ENCODE measurements at regions of chr4 and their contacts with region 1.

Region 1: GRCh38 chr4:82900331-82901128 is at the start of gene THAP9:
- DNase-seq: peak; percentile 99
- ATAC-seq: peak; percentile 92
- H3K4me3 Mint-ChIP-seq: no peak within 1 kb of the TSS
- H3K27ac Mint-ChIP-seq: no peak within 1 kb of the TSS
- H3K4me1 Mint-ChIP-seq: peaks cover 39% of the 10 kb centered on the region
- H3K27me3 Mint-ChIP-seq: no peaks in the 10 kb centered on the region
- total RNA-seq, gene THAP9: 1.7 to 2.6 TPM

Region 2: GRCh38 chr4:81814987-81815541 is 1085.5 kb before region 1 on chr4:
- CTCF ChIA-PET with region 1: no interaction called
- POLR2A ChIA-PET with region 1: no interaction called
- intact Hi-C with region 1: no loop called
- DNase-seq: no peak
- ATAC-seq: no peak
- H3K4me3 Mint-ChIP-seq: no peak overlapping the region
- H3K27ac Mint-ChIP-seq: no peak overlapping the region
- H3K4me1 Mint-ChIP-seq: no peaks in the 10 kb centered on the region
- H3K27me3 Mint-ChIP-seq: peaks cover 9% of the 10 kb centered on the region

Region 3: GRCh38 chr4:82428969-82429727 is 471.4 kb before region 1 on chr4:
- CTCF ChIA-PET with region 1: no interaction called
- POLR2A ChIA-PET with region 1: interaction called, 6 read pairs
- intact Hi-C with region 1: loop called (anchors 1 to 2 kb)
- DNase-seq: peak; percentile 96
- ATAC-seq: peak; percentile 55
- H3K4me3 Mint-ChIP-seq: peak overlapping the region; percentile 94
- H3K27ac Mint-ChIP-seq: peak overlapping the region; percentile 99
- H3K4me1 Mint-ChIP-seq: peaks cover 50% of the 10 kb centered on the region
- H3K27me3 Mint-ChIP-seq: no peaks in the 10 kb centered on the region

Region 4: DNA sequence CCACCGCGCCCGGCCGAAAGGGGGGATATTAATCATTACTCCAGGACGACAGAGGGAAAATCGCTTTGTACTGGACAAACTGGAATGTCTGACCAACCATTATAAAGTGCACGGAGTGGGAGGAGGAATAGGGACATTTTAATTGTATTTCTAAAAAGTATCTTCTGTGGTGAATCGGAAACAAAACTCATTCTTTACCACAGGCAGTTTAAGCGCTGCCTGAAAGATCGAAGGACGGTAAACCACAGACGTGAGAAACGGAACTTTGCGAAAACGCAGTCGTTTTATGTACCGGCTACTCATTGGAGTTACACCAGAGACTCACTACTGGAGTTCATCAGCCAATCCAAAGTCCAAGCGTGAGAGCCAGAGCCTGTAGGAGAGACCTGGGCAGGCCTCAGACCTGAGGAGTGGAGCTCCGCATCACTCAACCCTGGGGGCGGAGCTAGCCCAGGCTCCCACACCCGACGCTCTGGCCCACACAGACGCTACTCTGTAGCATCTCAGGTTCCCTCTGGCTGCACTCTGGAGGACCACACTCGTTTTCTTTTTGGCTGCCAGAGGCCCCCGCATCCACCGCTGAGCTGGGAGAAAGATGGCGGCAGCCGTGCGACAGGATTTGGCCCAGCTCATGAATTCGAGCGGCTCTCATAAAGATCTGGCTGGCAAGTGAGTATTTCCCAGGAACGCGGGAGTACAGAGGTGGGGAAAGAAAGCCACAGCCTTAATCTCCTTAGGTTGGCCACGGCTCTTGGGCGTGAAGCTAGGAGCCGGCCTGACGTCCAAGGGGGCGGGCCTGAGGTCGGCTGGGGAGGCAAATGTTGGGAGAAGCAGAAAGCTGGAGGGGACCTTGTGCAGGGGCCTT is 134.3 kb after region 1 on chr4 and contains the start of gene COPS4:
- CTCF ChIA-PET with region 1: interaction called, 5 read pairs
- POLR2A ChIA-PET with region 1: interaction called, 14 read pairs
- intact Hi-C with region 1: loop called (anchors 1 kb)
- DNase-seq: peak; percentile 97
- ATAC-seq: peak; percentile 97
- H3K4me3 Mint-ChIP-seq: peak within 1 kb of the TSS; percentile 91
- H3K27ac Mint-ChIP-seq: peak within 1 kb of the TSS; percentile 94
- H3K4me1 Mint-ChIP-seq: peaks cover 22% of the 10 kb centered on the region
- H3K27me3 Mint-ChIP-seq: no peaks in the 10 kb centered on the region
- total RNA-seq, gene COPS4: 35.7 to 35.9 TPM

Region 5: DNA sequence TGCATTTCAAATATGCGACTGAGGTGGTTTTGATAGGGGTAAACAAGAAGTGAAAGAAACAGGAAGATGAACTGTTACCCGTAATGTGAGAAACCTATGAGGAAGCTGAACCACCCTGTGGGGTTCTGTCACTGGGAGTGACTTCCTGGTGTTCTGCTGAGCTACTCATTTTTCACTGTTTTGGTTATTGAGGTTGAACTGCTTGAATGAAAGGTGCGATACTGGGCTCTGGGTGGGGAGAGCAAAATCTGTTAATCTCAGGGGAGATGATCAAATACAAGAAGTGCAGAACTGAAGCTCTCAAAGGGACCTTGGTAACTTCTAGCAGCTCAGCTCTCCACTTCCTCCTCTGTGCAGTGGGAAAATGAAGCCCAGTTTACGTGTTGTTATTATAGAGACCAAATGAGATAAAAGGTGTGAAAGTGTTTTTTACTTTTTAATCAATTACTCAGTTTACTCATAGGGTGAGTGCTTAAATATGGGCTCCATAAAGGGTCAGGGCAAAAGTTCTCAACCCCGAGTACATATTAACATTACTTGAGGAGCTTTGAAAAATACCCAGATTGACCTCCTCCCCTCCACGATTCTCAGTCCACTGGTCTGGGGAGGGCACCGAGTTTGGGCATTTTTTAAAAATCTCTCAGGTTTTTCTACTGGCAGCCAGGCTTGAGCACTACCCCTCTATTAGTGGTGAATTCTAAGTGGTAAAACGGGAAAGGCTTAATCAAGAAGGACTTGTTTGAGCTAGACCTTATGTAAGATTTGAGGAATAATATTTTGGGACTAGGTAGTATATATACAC is 317.4 kb after region 1 on chr4:
- CTCF ChIA-PET with region 1: no interaction called
- POLR2A ChIA-PET with region 1: no interaction called
- intact Hi-C with region 1: loop called (anchors 2 to 5 kb)
- DNase-seq: peak; percentile 73
- ATAC-seq: peak; percentile 85
- H3K4me3 Mint-ChIP-seq: peak overlapping the region; percentile 20
- H3K27ac Mint-ChIP-seq: peak overlapping the region; percentile 76
- H3K4me1 Mint-ChIP-seq: peaks cover 79% of the 10 kb centered on the region
- H3K27me3 Mint-ChIP-seq: peaks cover 2% of the 10 kb centered on the region

Region 6: GRCh38 chr4:83229791-83230190 is 329.3 kb after region 1 on chr4:
- CTCF ChIA-PET with region 1: no interaction called
- POLR2A ChIA-PET with region 1: no interaction called
- intact Hi-C with region 1: no loop called
- DNase-seq: no peak
- ATAC-seq: no peak
- H3K4me3 Mint-ChIP-seq: no peak overlapping the region
- H3K27ac Mint-ChIP-seq: no peak overlapping the region
- H3K4me1 Mint-ChIP-seq: peaks cover 28% of the 10 kb centered on the region
- H3K27me3 Mint-ChIP-seq: peaks cover 27% of the 10 kb centered on the region

Region 7: GRCh38 chr4:83455281-83456129 is 555.0 kb after region 1 on chr4 and contains the starts of genes HELQ and MRPS18C:
- CTCF ChIA-PET with region 1: no interaction called
- POLR2A ChIA-PET with region 1: no interaction called
- intact Hi-C with region 1: loop called (anchors 1 to 5 kb)
- DNase-seq: peak; percentile 97
- ATAC-seq: peak; percentile 92
- H3K4me3 Mint-ChIP-seq: peak within 1 kb of the TSS; percentile 97
- H3K27ac Mint-ChIP-seq: peak within 1 kb of the TSS; percentile 99
- H3K4me1 Mint-ChIP-seq: peaks cover 37% of the 10 kb centered on the region
- H3K27me3 Mint-ChIP-seq: no peaks in the 10 kb centered on the region
- total RNA-seq, gene HELQ: 9.3 to 10.1 TPM
- total RNA-seq, gene MRPS18C: 78.0 to 89.5 TPM

Measured in activated CD4-positive, alpha-beta T cell treated with anti-CD3 and anti-CD28 coated beads for 36 hours (primary cell).